ENCODE measurements at regions of chr11 and their contacts with region 1.

Region 1: DNA sequence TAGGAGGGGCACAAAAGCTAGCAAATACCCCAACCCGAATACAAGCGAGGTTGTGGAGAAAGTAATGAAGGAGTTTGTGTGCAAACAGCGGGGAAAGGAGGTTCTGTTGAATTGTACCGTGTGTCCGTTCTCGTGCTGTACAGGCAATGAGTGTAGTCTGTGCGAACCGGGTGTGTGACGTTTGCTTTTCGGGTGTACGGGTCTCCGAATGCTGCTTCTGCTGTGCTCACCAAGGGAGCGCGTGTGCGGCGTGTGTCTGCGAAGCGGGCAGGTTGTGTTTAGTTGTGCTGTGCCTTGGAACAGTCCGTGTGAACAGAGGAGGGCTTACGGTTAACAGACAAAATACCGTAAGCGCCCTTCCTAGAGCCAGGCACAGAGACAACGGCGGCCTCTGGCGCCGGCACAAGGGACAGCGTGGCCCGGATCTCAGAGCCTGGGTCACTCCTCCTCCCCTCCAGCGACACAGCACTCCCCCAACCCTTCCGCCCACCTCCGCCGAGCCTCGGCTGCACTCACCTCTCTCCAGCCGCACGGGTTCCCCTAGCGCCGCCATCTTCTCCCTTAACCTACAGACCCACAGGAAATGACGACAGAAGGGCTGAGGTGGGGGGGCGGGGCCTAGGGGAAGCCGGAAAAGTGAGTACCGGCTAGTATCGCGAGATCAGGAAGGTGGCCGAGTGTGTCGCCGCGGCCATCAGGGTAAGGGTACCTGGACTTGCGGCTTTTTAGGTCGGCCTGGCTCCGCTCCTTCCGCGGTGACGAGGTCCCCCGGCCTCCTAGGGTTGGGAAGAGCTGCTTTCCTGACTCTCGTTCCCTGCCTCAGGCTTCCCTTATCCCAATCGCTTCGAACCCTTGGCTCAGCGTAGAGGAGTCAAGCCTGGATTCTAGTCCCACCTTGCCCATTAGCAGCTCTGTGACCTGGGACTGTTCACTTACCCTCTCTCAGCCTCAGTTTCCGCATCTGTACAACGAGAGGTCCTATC is at the start of gene LIN7C:
- DNase-seq: peak; percentile 98
- ATAC-seq: peak; percentile 91
- H3K4me3 ChIP-seq: peak within 1 kb of the TSS; percentile 81 to 99 (median 98)
- H3K4me3 Mint-ChIP-seq: peak within 1 kb of the TSS; percentile 100
- H3K27ac ChIP-seq: peak within 1 kb of the TSS; percentile 96 to 97
- H3K27ac Mint-ChIP-seq: peak within 1 kb of the TSS; percentile 97
- H3K4me1 ChIP-seq: peaks cover 23 to 25% of the 10 kb centered on the region in 2 donors
- H3K4me1 Mint-ChIP-seq: peaks cover 45% of the 10 kb centered on the region
- H3K27me3 ChIP-seq: no peaks in the 10 kb centered on the region
- H3K27me3 Mint-ChIP-seq: no peaks in the 10 kb centered on the region
- CTCF ChIP-seq: no peak
- total RNA-seq, gene LIN7C: 24.2 TPM in 2 replicates

Region 2: GRCh38 chr11:27084518-27084917 is 422.0 kb before region 1 on chr11:
- CTCF ChIA-PET with region 1: no interaction called
- POLR2A ChIA-PET with region 1: no interaction called
- intact Hi-C with region 1: no loop called
- DNase-seq: no peak
- ATAC-seq: no peak
- H3K4me3 ChIP-seq: no peak overlapping the region
- H3K4me3 Mint-ChIP-seq: no peak overlapping the region
- H3K27ac ChIP-seq: no peak overlapping the region
- H3K27ac Mint-ChIP-seq: no peak overlapping the region
- H3K4me1 ChIP-seq: no peaks in the 10 kb centered on the region
- H3K4me1 Mint-ChIP-seq: no peaks in the 10 kb centered on the region
- H3K27me3 ChIP-seq: no peaks in the 10 kb centered on the region
- H3K27me3 Mint-ChIP-seq: no peaks in the 10 kb centered on the region
- CTCF ChIP-seq: no peak

Region 3: GRCh38 chr11:27472398-27473016 is 34.0 kb before region 1 on chr11 and contains the start of gene LGR4:
- CTCF ChIA-PET with region 1: no interaction called
- POLR2A ChIA-PET with region 1: no interaction called
- intact Hi-C with region 1: loop called (anchors 1 kb)
- DNase-seq: peak; percentile 80
- ATAC-seq: peak; percentile 88
- H3K4me3 ChIP-seq: peak within 1 kb of the TSS; percentile 52 to 72 (median 66)
- H3K4me3 Mint-ChIP-seq: peak within 1 kb of the TSS; percentile 92
- H3K27ac ChIP-seq: no peak within 1 kb of the TSS
- H3K27ac Mint-ChIP-seq: peak within 1 kb of the TSS; percentile 63
- H3K4me1 ChIP-seq: peaks cover 11% of the 10 kb centered on the region in 2 donors
- H3K4me1 Mint-ChIP-seq: peaks cover 22% of the 10 kb centered on the region
- H3K27me3 ChIP-seq: peaks cover 0 to 8% (median 0%) of the 10 kb centered on the region in 4 experiments
- H3K27me3 Mint-ChIP-seq: peaks cover 4% of the 10 kb centered on the region
- CTCF ChIP-seq: no peak
- total RNA-seq, gene LGR4: 3.3 TPM in 2 replicates

Region 4: DNA sequence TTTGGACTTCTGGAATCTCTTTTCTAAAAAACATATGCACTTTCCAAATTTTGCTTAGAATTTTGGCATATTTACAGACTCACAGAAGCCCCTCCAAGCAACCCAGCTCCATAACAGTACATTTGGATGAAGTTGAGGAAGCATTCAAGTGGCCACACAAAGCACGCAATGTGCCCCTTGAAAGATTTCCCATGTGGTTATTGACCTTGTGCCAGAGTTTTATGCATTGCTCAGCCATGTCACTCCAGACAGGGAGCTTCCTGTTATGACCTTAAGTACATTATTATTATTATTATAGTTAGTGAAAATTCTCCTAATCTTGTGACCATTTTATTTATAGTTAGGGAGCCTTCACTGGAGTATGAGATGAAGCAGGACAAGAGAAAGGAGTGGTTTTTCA is 228.8 kb after region 1 on chr11:
- CTCF ChIA-PET with region 1: no interaction called
- POLR2A ChIA-PET with region 1: no interaction called
- intact Hi-C with region 1: no loop called
- DNase-seq: no peak
- ATAC-seq: no peak
- H3K4me3 ChIP-seq: no peak overlapping the region
- H3K4me3 Mint-ChIP-seq: no peak overlapping the region
- H3K27ac ChIP-seq: no peak overlapping the region
- H3K27ac Mint-ChIP-seq: no peak overlapping the region
- H3K4me1 ChIP-seq: no peaks in the 10 kb centered on the region
- H3K4me1 Mint-ChIP-seq: no peaks in the 10 kb centered on the region
- H3K27me3 ChIP-seq: peaks cover 0 to 4% (median 0%) of the 10 kb centered on the region in 4 experiments
- H3K27me3 Mint-ChIP-seq: no peaks in the 10 kb centered on the region
- CTCF ChIP-seq: no peak

Region 5: GRCh38 chr11:28107748-28108618 is 601.5 kb after region 1 on chr11 and contains the starts of genes KIF18A and METTL15:
- CTCF ChIA-PET with region 1: no interaction called
- POLR2A ChIA-PET with region 1: no interaction called
- intact Hi-C with region 1: loop called (anchors 1 kb)
- DNase-seq: peak; percentile 99
- ATAC-seq: peak; percentile 86
- H3K4me3 ChIP-seq: peak within 1 kb of the TSS; percentile 51 to 95 (median 76)
- H3K4me3 Mint-ChIP-seq: peak within 1 kb of the TSS; percentile 94
- H3K27ac ChIP-seq: peak within 1 kb of the TSS; percentile 89 to 96
- H3K27ac Mint-ChIP-seq: peak within 1 kb of the TSS; percentile 98
- H3K4me1 ChIP-seq: peaks cover 30% of the 10 kb centered on the region in 2 donors
- H3K4me1 Mint-ChIP-seq: peaks cover 52% of the 10 kb centered on the region
- H3K27me3 ChIP-seq: no peaks in the 10 kb centered on the region
- H3K27me3 Mint-ChIP-seq: no peaks in the 10 kb centered on the region
- CTCF ChIP-seq: no peak
- total RNA-seq, gene KIF18A: 4.1 and 4.2 TPM in 2 replicates
- total RNA-seq, gene METTL15: 19.7 and 22.8 TPM in 2 replicates